Activated CD4-positive, alpha-beta T cell treated with anti-CD3 and anti-CD28 coated beads, Interleukin-2, amount 10 ng/mL, durations not matched to agents 7 days and 5 days (primary cell): ENCODE measurements at regions of chr2 and their contacts with region 1.

Region 1: GRCh38 chr2:240586198-240586918 is at the start of gene CAPN10:
- DNase-seq: peak; percentile 97
- H3K4me3 Mint-ChIP-seq: peak within 1 kb of the TSS; percentile 92
- H3K27ac Mint-ChIP-seq: peak within 1 kb of the TSS; percentile 93
- H3K4me1 Mint-ChIP-seq: peaks cover 56% of the 10 kb centered on the region
- H3K27me3 Mint-ChIP-seq: no peaks in the 10 kb centered on the region
- total RNA-seq, gene CAPN10: 40.5 to 58.6 TPM

Region 2: DNA sequence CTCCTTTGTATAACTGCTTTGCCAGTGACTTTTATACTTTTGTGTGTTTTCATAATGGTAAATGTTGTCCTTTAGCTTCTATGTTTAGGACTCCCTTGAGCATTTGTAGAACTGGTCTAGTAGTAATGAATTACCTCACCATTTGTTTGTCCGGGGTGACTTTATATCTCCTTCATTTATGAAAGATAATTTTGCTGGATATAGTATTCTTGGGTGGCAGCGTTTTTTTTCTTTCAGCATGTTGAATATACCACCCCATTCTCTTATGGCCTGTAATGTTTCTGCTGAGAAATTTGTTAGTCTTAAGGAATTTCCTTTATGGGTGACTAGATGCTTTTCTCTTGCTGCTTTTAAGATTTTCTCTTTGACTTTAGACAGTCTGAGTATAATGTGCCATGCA is 94.9 kb before region 1 on chr2:
- CTCF ChIA-PET with region 1: no interaction called
- POLR2A ChIA-PET with region 1: no interaction called
- DNase-seq: no peak
- H3K4me3 Mint-ChIP-seq: no peak overlapping the region
- H3K27ac Mint-ChIP-seq: no peak overlapping the region
- H3K4me1 Mint-ChIP-seq: no peaks in the 10 kb centered on the region
- H3K27me3 Mint-ChIP-seq: peaks cover 8% of the 10 kb centered on the region

Region 3: DNA sequence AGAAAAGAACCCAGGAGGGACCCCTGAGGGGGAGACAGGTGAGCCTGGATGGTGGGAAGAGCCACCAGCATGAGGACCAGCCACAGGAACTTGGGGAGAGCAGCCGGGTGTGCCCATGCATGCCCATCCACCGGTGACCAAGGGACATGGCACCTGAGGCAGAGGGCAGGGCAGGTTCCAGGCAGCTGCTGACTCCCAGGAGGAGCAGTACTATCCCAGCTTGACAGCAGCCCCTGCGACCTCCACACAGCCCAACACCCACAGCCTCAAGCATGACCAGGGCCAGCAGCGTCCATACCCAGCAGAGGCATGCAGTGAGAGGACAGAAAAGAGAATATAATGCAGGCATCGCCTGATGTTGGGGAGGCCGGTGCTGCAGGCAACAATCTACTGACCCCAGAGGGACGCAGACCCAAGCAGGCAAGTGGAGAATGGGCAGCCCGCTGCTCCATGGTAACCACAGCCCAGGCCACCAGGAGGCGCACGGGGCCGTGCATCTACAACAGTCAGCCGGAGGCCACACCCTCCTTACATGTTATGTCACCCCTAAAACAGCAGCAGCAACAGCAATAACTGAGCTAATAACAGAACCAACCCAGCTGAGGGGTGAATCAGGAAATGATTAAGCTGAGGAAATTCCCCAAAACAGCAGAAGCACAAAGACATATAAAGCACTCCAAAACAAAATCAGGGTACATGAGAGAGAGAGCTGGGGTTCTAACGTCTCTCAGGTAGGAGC is 72.6 kb before region 1 on chr2:
- CTCF ChIA-PET with region 1: interaction called, 14 read pairs
- POLR2A ChIA-PET with region 1: no interaction called
- DNase-seq: peak; percentile 85
- H3K4me3 Mint-ChIP-seq: no peak overlapping the region
- H3K27ac Mint-ChIP-seq: peak overlapping the region; percentile 10
- H3K4me1 Mint-ChIP-seq: peaks cover 7% of the 10 kb centered on the region
- H3K27me3 Mint-ChIP-seq: no peaks in the 10 kb centered on the region

Region 4: GRCh38 chr2:240524963-240525718 is 61.2 kb before region 1 on chr2:
- CTCF ChIA-PET with region 1: no interaction called
- POLR2A ChIA-PET with region 1: no interaction called
- DNase-seq: no peak
- H3K4me3 Mint-ChIP-seq: no peak overlapping the region
- H3K27ac Mint-ChIP-seq: no peak overlapping the region
- H3K4me1 Mint-ChIP-seq: peaks cover 3% of the 10 kb centered on the region
- H3K27me3 Mint-ChIP-seq: peaks cover 4% of the 10 kb centered on the region

Region 5: DNA sequence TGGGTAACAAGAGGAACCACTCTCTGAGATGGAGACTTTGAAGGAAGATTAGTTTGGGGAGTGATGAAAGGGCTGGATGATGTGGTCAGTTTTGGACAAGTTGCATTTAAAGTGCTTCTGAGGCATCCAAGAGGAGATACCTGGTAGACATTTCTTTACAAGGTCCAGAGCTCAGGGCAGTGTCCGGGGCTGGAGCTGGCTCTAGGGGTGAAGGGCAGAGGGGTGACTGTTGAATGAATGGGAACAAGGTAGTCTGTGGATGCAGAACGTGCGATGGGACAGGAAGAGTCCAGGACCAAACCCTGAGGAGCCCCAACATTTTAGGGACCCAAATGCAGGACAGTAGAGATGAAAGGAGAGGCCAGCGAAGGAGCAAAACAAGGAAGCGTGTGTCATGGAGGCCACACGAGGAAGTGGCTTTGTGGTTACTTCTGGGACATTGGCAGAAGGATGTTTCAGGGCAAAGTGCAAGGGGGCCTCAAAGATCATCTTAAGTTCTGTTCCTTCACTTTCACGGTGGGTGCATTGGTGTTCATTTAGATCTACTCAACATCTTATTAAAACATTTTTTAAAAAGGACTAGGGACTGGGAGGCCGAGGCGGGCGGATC is 25.3 kb after region 1 on chr2:
- CTCF ChIA-PET with region 1: interaction called, 12 read pairs
- POLR2A ChIA-PET with region 1: no interaction called
- DNase-seq: peak; percentile 31
- H3K4me3 Mint-ChIP-seq: peak overlapping the region; percentile 30
- H3K27ac Mint-ChIP-seq: no peak overlapping the region
- H3K4me1 Mint-ChIP-seq: peaks cover 2% of the 10 kb centered on the region
- H3K27me3 Mint-ChIP-seq: no peaks in the 10 kb centered on the region

Region 6: DNA sequence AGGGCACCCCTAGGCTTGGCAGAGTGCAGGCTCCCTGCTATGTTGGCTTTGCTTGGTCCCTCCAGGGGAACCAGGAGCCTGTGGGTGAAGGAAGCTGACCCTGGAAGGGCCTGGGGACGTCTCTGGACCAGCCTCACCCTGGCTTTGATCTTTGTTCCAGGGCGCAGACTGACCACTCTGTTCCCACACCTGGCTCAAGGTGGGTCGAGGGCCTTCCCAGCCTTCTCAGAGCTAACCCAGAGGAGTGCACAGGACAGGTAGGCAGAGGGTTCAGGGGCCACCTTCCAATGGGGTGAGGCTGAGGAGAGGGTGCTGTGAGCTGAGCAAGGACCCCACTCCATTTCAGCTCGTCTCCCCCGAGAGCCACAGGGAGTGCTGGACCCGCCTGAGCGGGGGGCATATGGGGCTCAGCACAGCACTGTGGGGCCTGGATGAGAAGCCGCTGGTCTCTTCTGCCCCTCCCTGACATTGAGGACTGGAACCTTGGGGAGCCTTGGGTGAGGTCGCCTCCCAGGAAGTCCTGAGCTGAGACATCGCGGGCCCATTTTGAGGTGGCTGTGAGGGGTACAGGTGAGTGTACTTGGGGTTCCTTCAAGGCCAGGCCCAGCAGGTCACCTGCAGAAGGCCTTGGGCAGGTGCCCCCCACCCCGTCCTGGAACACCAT is 102.0 kb after region 1 on chr2:
- CTCF ChIA-PET with region 1: no interaction called
- POLR2A ChIA-PET with region 1: no interaction called
- DNase-seq: no peak
- H3K4me3 Mint-ChIP-seq: no peak overlapping the region
- H3K27ac Mint-ChIP-seq: no peak overlapping the region
- H3K4me1 Mint-ChIP-seq: peaks cover 12% of the 10 kb centered on the region
- H3K27me3 Mint-ChIP-seq: no peaks in the 10 kb centered on the region